ENCODE measurements at regions of chr3 and their contacts with region 1.

Region 1: DNA sequence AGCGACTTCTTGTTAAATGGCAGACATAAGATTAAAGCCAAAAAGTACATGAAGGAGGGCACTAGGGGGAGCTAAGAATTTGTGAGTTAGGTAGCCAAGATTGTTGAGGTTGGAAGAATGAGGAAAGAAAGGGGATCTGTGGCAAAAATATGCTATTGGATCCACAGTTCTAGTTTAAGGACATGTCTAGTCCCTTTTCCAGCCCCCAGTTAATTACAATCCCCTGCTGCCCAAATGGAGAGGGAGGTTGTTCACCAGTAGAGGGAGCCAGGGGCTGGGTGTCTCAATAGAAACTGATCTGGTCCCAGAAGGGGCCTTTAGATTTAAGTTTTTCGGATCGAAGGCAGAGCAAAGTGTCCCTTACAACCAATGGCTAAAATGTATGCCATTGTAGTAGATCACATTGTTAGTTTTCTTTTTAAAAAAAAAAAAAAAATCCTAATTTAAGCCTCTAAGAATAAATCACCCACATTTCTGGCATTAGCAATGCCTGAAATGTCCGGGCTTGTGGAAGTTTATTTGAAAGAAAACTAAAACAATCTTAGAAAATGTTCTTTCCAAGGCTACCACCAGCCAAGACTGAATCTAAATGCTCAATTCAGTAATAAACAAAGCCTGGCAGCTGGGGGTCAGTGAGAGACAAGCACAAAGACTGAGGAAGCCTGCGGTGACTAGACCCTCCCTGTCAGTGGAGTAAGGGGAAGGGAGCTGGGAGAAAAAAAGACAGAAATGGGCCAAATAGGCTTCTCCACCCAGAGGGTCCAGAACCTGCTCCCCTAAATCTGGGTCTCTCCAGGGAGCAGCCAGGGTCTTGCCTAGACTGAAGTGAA is 7.1 kb downstream of the COL8A1 start:
- DNase-seq: peak; percentile 43
- H3K4me3 ChIP-seq: no peak overlapping the region
- H3K27ac ChIP-seq: peak overlapping the region; percentile 59
- H3K4me1 ChIP-seq: peaks cover 30% of the 10 kb centered on the region
- H3K27me3 ChIP-seq: no peaks in the 10 kb centered on the region
- CTCF ChIP-seq: peak; percentile 64 to 86

Region 2: GRCh38 chr3:99678023-99678422 is 32.5 kb after region 1 on chr3:
- CTCF ChIA-PET with region 1: no interaction called
- dilution Hi-C with region 1: no loop called
- in situ Hi-C with region 1: no loop called
- intact Hi-C with region 1: loop called (anchors 1 kb)
- DNase-seq: peak; percentile 87
- H3K4me3 ChIP-seq: no peak overlapping the region
- H3K27ac ChIP-seq: peak overlapping the region; percentile 35
- H3K4me1 ChIP-seq: peaks cover 34% of the 10 kb centered on the region
- H3K27me3 ChIP-seq: no peaks in the 10 kb centered on the region
- CTCF ChIP-seq: peak in 1 of 2 donors; percentile 1

Region 3: GRCh38 chr3:99747915-99748314 is 102.4 kb after region 1 on chr3:
- CTCF ChIA-PET with region 1: interaction called, 3 read pairs
- dilution Hi-C with region 1: loop called (anchors 25 kb)
- in situ Hi-C with region 1: no loop called
- intact Hi-C with region 1: loop called (anchors 1 kb)
- DNase-seq: peak; percentile 55
- H3K4me3 ChIP-seq: no peak overlapping the region
- H3K27ac ChIP-seq: peak overlapping the region; percentile 47
- H3K4me1 ChIP-seq: peaks cover 25% of the 10 kb centered on the region
- H3K27me3 ChIP-seq: no peaks in the 10 kb centered on the region
- CTCF ChIP-seq: peak; percentile 46 to 68

Region 4: DNA sequence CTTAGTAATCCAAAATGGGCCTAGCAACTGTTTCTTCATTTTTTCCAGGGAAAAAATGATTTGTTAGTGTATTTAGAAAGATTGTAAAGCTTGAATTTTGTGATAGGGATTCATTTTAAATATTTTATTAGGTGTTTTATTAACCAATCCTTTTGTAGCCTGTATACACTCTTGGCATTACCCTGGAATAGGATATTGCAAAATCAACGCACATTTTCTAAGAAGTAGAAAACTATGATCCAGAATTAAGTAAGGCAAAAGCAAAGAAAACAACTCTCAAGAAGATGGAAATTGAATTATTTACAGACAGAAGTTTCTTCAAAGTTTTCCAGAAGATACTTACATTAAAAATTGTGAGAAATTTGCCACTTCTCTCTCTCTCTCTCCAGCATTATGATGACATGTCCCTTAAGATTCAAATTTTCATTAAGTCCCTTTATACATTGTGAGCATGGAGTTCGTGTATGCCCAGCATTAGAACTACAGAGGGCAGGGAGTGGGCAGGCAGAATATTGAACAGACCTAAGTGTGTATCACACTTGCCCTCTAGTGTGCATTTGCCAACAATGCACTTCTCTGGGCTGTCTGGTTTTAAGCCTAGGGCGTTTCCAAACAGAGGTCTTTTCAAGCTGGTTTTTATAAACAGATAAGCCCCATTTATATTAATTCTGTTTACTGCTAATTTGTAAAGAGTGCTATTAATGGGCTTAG is 143.7 kb after region 1 on chr3:
- CTCF ChIA-PET with region 1: no interaction called
- dilution Hi-C with region 1: no loop called
- in situ Hi-C with region 1: no loop called
- intact Hi-C with region 1: loop called (anchors 1 kb)
- DNase-seq: peak; percentile 44
- H3K4me3 ChIP-seq: no peak overlapping the region
- H3K27ac ChIP-seq: no peak overlapping the region
- H3K4me1 ChIP-seq: no peaks in the 10 kb centered on the region
- H3K27me3 ChIP-seq: no peaks in the 10 kb centered on the region
- CTCF ChIP-seq: peak; percentile 79 to 82

Region 5: GRCh38 chr3:99875929-99876841 is 230.7 kb after region 1 on chr3:
- CTCF ChIA-PET with region 1: no interaction called
- dilution Hi-C with region 1: no loop called
- in situ Hi-C with region 1: no loop called
- intact Hi-C with region 1: no loop called
- DNase-seq: peak; percentile 54
- H3K4me3 ChIP-seq: peak overlapping the region; percentile 81 to 98 (median 83)
- H3K27ac ChIP-seq: peak overlapping the region; percentile 86
- H3K4me1 ChIP-seq: peaks cover 16% of the 10 kb centered on the region
- H3K27me3 ChIP-seq: no peaks in the 10 kb centered on the region
- CTCF ChIP-seq: no peak